A549 (cell line): ENCODE measurements at regions of chr1 and their contacts with region 1.

Region 1: DNA sequence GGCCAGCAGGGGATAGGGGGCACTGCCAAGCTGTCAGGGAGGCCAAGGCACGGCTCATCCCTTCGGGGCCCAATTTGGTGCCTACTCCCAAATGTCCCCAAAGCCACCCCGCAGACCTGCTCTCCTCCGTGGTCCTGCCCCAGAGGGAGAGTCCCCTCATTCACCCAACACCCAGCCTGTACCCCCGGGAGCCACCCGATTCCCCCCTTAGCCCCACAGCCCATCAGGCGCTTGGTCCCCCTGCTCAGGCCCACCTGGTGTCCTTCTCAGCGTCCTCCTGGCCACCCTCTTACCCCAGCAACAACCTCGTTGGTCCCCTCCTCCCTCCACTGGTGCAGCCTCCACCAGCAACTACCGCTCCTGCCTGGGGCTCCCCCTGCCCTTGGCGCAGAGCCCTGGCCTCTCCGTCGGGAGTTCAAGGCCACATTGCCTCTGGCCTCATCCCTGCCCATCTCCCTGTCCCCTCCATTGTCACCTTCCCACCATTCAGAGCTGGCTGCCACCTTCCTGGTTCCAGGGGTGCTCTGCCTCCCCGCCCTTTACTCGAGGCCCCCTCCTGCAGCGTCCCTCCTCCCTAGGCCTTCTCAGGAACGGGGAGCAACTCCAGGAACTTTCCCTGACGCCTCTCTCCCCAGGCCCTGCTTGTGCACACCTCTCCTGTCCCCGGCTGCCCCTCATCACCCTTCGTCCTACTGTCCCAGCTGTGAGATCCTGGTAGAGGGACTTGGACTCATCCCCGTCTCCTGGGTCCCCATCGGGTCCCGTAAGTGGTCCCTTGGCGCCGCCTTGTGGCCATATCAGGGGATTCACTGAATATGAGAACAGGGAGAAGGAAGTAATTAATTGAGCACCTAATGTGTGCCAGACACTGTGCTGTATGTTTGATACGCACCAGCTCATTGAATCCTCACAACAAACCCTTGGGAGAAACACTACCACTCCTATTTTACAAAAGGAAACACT is 73.9 kb downstream of the RAP1GAP start:
- DNase-seq: peak; percentile 60 to 70
- ATAC-seq: peak in 1 of 2 experiments; percentile 77; a peak in 3 of 6 replicates
- H3K4me3 ChIP-seq: no peak overlapping the region
- H3K27ac ChIP-seq: no peak overlapping the region
- H3K4me1 ChIP-seq: 0 out of 3 replicates have a peak, but pooled peaks cover 5% of the 10 kb centered on the region
- CTCF ChIP-seq: peak; percentile 62
- EP300 ChIP-seq: no peak
- POLR2A ChIP-seq: no peak
- RAD21 ChIP-seq: peak; percentile 69 to 86

Region 2: GRCh38 chr1:21176586-21177555 is 418.3 kb before region 1 on chr1 and contains the start of gene EIF4G3:
- CTCF ChIA-PET with region 1: no interaction called
- POLR2A ChIA-PET with region 1: no interaction called
- DNase-seq: peak; percentile 77 to 92
- ATAC-seq: peak; percentile 87 to 97
- H3K4me3 ChIP-seq: peak within 1 kb of the TSS; percentile 94
- H3K27ac ChIP-seq: peak within 1 kb of the TSS; percentile 93 to 99
- H3K4me1 ChIP-seq: peaks cover 21% of the 10 kb centered on the region
- CTCF ChIP-seq: no peak
- EP300 ChIP-seq: no peak
- POLR2A ChIP-seq: peak; percentile 73
- RAD21 ChIP-seq: no peak
- polyA plus RNA-seq, gene EIF4G3: 46.9 and 51.3 TPM in 2 replicates

Region 3: GRCh38 chr1:21414015-21414414 is 181.2 kb before region 1 on chr1:
- CTCF ChIA-PET with region 1: no interaction called
- POLR2A ChIA-PET with region 1: no interaction called
- DNase-seq: no peak
- ATAC-seq: no peak
- H3K4me3 ChIP-seq: no peak overlapping the region
- H3K27ac ChIP-seq: no peak overlapping the region
- H3K4me1 ChIP-seq: no peaks in the 10 kb centered on the region
- CTCF ChIP-seq: no peak
- EP300 ChIP-seq: no peak
- POLR2A ChIP-seq: no peak
- RAD21 ChIP-seq: no peak

Region 4: GRCh38 chr1:21508580-21509350 is 86.5 kb before region 1 on chr1:
- CTCF ChIA-PET with region 1: interaction called, 60 read pairs
- POLR2A ChIA-PET with region 1: no interaction called
- DNase-seq: peak; percentile 30 to 62
- ATAC-seq: peak; percentile 88 to 91
- H3K4me3 ChIP-seq: peak overlapping the region; percentile 41
- H3K27ac ChIP-seq: peak overlapping the region in 1 of 2 experiments; percentile 58; a peak in 3 of 6 replicates
- H3K4me1 ChIP-seq: no peaks in the 10 kb centered on the region
- CTCF ChIP-seq: peak; percentile 72
- EP300 ChIP-seq: no peak
- POLR2A ChIP-seq: no peak
- RAD21 ChIP-seq: peak; percentile 52 to 75

Region 5: DNA sequence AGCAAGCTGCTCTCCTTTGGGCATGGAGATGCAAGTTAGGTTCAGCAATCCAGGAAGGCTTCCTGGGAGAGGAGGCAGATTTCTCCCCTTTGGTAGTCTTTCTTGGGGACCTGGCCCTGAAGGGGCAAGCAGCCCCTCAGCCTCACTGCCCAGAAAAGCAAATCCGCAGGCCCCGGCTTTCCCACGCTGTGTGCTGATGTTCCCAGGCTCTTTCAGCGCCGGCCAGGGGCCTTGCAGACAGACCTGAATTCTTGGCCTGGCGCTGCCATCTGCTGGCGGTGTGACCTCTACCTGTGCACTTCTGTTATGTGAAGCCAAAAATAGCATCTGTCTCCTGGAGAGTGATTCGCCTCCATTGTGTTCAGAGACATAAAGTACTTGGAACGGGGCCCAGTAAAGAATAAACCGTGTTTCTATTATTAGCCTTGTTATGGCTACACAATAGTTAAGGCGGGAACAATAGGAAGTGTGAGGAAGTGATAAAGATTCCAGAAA is 21.2 kb before region 1 on chr1:
- CTCF ChIA-PET with region 1: interaction called, 10 read pairs
- POLR2A ChIA-PET with region 1: no interaction called
- DNase-seq: peak; percentile 39 to 70
- ATAC-seq: peak; percentile 85 to 91
- H3K4me3 ChIP-seq: no peak overlapping the region
- H3K27ac ChIP-seq: no peak overlapping the region
- H3K4me1 ChIP-seq: no peaks in the 10 kb centered on the region
- CTCF ChIP-seq: peak; percentile 55
- EP300 ChIP-seq: no peak
- POLR2A ChIP-seq: no peak
- RAD21 ChIP-seq: peak; percentile 71 to 76